ENCODE measurements at regions of chr12 and their contacts with region 1.

Region 1: GRCh38 chr12:11067514-11067913 is 5.4 kb upstream of the TAS2R46 start:
- DNase-seq: no peak
- H3K4me3 Mint-ChIP-seq: no peak overlapping the region
- H3K27ac Mint-ChIP-seq: no peak overlapping the region
- H3K4me1 Mint-ChIP-seq: no peaks in the 10 kb centered on the region
- H3K27me3 Mint-ChIP-seq: no peaks in the 10 kb centered on the region

Region 2: GRCh38 chr12:11015775-11016430 is 51.6 kb before region 1 on chr12:
- CTCF ChIA-PET with region 1: no interaction called
- intact Hi-C with region 1: loop called (anchors 1 kb)
- DNase-seq: no peak
- H3K4me3 Mint-ChIP-seq: no peak overlapping the region
- H3K27ac Mint-ChIP-seq: no peak overlapping the region
- H3K4me1 Mint-ChIP-seq: no peaks in the 10 kb centered on the region
- H3K27me3 Mint-ChIP-seq: no peaks in the 10 kb centered on the region

Region 3: GRCh38 chr12:11039171-11039570 is 28.3 kb before region 1 on chr12:
- CTCF ChIA-PET with region 1: interaction called, 3 read pairs
- intact Hi-C with region 1: loop called (anchors 1 kb)
- DNase-seq: no peak
- H3K4me3 Mint-ChIP-seq: no peak overlapping the region
- H3K27ac Mint-ChIP-seq: no peak overlapping the region
- H3K4me1 Mint-ChIP-seq: no peaks in the 10 kb centered on the region
- H3K27me3 Mint-ChIP-seq: no peaks in the 10 kb centered on the region

Region 4: DNA sequence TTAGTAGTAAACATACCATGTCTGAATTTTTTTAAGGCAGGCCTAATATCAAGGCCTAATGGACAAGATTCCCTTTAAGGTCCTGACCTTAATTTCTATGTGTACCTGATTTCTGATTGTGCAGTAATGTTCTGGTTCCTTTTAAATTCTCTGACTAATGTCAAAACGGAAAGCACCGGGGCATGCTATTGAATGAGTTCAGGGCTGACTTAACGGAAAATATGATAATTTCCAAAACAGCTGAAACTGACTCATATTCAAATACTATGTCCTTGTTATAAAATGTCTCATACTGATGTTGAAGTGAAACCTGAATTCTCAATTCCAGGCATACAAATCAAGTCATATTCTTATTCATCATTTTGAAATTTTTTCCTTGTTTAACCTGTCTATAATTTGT is 17.9 kb after region 1 on chr12:
- CTCF ChIA-PET with region 1: no interaction called
- intact Hi-C with region 1: no loop called
- DNase-seq: peak; percentile 21
- H3K4me3 Mint-ChIP-seq: no peak overlapping the region
- H3K27ac Mint-ChIP-seq: no peak overlapping the region
- H3K4me1 Mint-ChIP-seq: peaks cover 5% of the 10 kb centered on the region
- H3K27me3 Mint-ChIP-seq: no peaks in the 10 kb centered on the region

Region 5: GRCh38 chr12:11136075-11136474 is 68.6 kb after region 1 on chr12:
- CTCF ChIA-PET with region 1: no interaction called
- intact Hi-C with region 1: no loop called
- DNase-seq: no peak
- H3K4me3 Mint-ChIP-seq: no peak overlapping the region
- H3K27ac Mint-ChIP-seq: no peak overlapping the region
- H3K4me1 Mint-ChIP-seq: peaks cover 27% of the 10 kb centered on the region
- H3K27me3 Mint-ChIP-seq: no peaks in the 10 kb centered on the region